CD4-positive, alpha-beta T cell (primary cell): ENCODE measurements at regions of chr9 and their contacts with region 1.

Region 1: DNA sequence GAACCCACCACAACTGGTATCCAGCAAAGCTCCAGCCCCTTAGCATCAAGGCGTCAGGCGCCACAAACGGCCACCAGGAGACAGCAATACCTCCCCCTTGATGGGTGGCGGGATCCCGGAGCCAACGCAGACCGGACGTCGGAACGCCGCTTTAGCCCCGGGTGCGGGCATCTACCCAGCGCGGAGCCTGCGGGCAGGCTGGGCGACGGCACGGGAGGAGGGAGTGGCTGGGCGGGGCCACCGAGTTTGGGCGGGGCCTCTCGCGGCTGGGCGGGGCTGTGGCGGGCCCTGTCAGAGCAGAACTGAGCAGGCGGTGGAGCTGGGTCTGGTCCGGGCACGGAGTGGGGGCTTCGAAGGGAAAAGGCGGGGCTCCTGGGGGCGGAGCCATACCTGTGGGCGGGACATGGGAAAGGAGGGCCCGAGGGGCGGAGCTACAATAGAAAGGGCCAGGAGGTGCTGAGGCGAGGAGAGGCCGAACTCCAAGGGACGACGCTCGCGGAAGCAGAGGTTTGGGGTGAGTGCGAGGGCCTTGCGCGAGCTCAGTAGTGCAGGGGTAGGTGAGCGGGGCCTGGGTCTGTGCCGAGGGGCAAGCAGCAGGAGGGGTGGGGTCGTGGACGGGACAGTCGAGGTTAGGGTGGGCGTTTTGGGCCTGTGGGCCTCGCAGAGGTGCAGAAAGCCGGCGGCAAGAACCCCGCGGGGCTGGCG is 40.2 kb upstream of the GARNL3 start:
- DNase-seq: peak; percentile 74 to 93 (median 86)
- ATAC-seq: peak; percentile 77
- H3K4me3 ChIP-seq: peak overlapping the region; percentile 67
- H3K4me3 Mint-ChIP-seq: peak overlapping the region; percentile 89
- H3K27ac ChIP-seq: no peak overlapping the region
- H3K27ac Mint-ChIP-seq: peak overlapping the region; percentile 90
- H3K4me1 ChIP-seq: peaks cover 35% of the 10 kb centered on the region
- H3K4me1 Mint-ChIP-seq: peaks cover 41% of the 10 kb centered on the region
- H3K27me3 ChIP-seq: no peaks in the 10 kb centered on the region
- H3K27me3 Mint-ChIP-seq: peaks cover 28% of the 10 kb centered on the region
- CTCF ChIP-seq: no peak

Region 2: GRCh38 chr9:127144670-127145445 is 79.5 kb before region 1 on chr9:
- CTCF ChIA-PET with region 1: no interaction called
- POLR2A ChIA-PET with region 1: no interaction called
- intact Hi-C with region 1: no loop called
- DNase-seq: no peak
- ATAC-seq: no peak
- H3K4me3 ChIP-seq: no peak overlapping the region
- H3K4me3 Mint-ChIP-seq: no peak overlapping the region
- H3K27ac ChIP-seq: no peak overlapping the region
- H3K27ac Mint-ChIP-seq: no peak overlapping the region
- H3K4me1 ChIP-seq: no peaks in the 10 kb centered on the region
- H3K4me1 Mint-ChIP-seq: no peaks in the 10 kb centered on the region
- H3K27me3 ChIP-seq: no peaks in the 10 kb centered on the region
- H3K27me3 Mint-ChIP-seq: no peaks in the 10 kb centered on the region
- CTCF ChIP-seq: no peak

Region 3: GRCh38 chr9:127244609-127245601 is 20.6 kb after region 1 on chr9:
- CTCF ChIA-PET with region 1: interaction called, 3 read pairs
- POLR2A ChIA-PET with region 1: interaction called, 22 read pairs
- intact Hi-C with region 1: loop called (anchors 1 kb)
- DNase-seq: peak; percentile 86 to 96 (median 94)
- ATAC-seq: peak; percentile 100
- H3K4me3 ChIP-seq: peak overlapping the region; percentile 56
- H3K4me3 Mint-ChIP-seq: peak overlapping the region; percentile 81
- H3K27ac ChIP-seq: no peak overlapping the region
- H3K27ac Mint-ChIP-seq: no peak overlapping the region
- H3K4me1 ChIP-seq: peaks cover 13% of the 10 kb centered on the region
- H3K4me1 Mint-ChIP-seq: peaks cover 12% of the 10 kb centered on the region
- H3K27me3 ChIP-seq: no peaks in the 10 kb centered on the region
- H3K27me3 Mint-ChIP-seq: peaks cover 20% of the 10 kb centered on the region
- CTCF ChIP-seq: no peak

Region 4: GRCh38 chr9:127396808-127397497 is 172.6 kb after region 1 on chr9 and contains the start of gene SLC2A8:
- CTCF ChIA-PET with region 1: interaction called, 3 read pairs
- POLR2A ChIA-PET with region 1: no interaction called
- intact Hi-C with region 1: loop called (anchors 1 to 5 kb)
- DNase-seq: peak; percentile 63 to 98 (median 76)
- ATAC-seq: peak; percentile 92
- H3K4me3 ChIP-seq: peak within 1 kb of the TSS; percentile 44
- H3K4me3 Mint-ChIP-seq: peak within 1 kb of the TSS; percentile 75
- H3K27ac ChIP-seq: no peak within 1 kb of the TSS
- H3K27ac Mint-ChIP-seq: no peak within 1 kb of the TSS
- H3K4me1 ChIP-seq: peaks cover 28% of the 10 kb centered on the region
- H3K4me1 Mint-ChIP-seq: peaks cover 21% of the 10 kb centered on the region
- H3K27me3 ChIP-seq: peaks cover 66 to 83% of the 10 kb centered on the region in 2 experiments
- H3K27me3 Mint-ChIP-seq: peaks cover 87% of the 10 kb centered on the region
- CTCF ChIP-seq: peak; percentile 18
- total RNA-seq, gene SLC2A8: 1.6 to 1.8 TPM

Region 5: DNA sequence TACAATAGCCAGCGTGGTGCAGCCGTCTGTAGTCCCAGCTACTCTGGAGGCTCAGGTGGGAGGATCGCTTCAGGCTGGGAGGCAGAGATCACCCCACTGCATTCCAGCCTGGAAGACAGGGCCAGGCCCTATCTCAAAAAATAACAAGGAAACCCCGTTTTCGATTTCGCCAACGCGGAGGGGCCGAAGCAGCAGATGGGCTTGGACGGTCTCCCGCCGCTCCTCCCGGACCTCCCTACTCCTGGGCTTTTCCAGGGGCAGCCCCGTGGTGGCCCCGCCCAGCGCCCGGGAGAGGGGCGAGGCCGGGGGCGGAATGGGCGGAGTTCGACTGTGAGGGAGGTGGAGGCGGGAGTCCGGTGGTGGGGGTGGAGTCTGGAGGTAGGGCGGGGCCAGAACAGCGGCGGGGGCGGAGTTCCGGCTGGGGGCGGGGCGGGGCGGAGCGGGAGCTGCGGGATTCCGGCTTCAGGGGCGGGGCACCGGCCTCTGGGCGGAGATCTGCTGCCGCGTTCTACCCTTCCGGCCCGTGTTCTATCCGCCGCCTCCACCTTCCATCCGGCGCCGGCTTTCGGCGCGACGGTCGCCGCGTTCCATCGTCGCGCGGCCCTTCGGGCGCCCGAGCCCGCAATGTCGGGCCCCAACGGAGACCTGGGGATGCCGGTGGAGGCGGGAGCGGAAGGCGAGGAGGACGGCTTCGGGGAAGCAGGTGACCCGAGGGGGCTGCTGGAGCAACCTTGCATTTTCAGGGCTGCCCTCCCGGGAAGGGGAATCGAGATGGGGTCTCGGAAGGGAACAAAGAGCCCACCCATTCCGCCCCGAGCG is 935.7 kb after region 1 on chr9 and contains the start of gene BBLN:
- CTCF ChIA-PET with region 1: no interaction called
- POLR2A ChIA-PET with region 1: no interaction called
- intact Hi-C with region 1: loop called in 1 of 2 experiments (anchors 10 kb)
- DNase-seq: peak; percentile 86 to 97 (median 92)
- ATAC-seq: peak; percentile 78
- H3K4me3 ChIP-seq: peak within 1 kb of the TSS; percentile 97
- H3K4me3 Mint-ChIP-seq: peak within 1 kb of the TSS; percentile 89
- H3K27ac ChIP-seq: peak within 1 kb of the TSS; percentile 77 to 86
- H3K27ac Mint-ChIP-seq: peak within 1 kb of the TSS; percentile 92
- H3K4me1 ChIP-seq: peaks cover 24% of the 10 kb centered on the region
- H3K4me1 Mint-ChIP-seq: peaks cover 20% of the 10 kb centered on the region
- H3K27me3 ChIP-seq: no peaks in the 10 kb centered on the region
- H3K27me3 Mint-ChIP-seq: no peaks in the 10 kb centered on the region
- CTCF ChIP-seq: no peak
- total RNA-seq, gene BBLN: 53.6 to 55.9 TPM